GM10248 (cell line): ENCODE measurements at regions of chr5 and their contacts with region 1.

Region 1: GRCh38 chr5:132410451-132411381 is 41.2 kb downstream of the SLC22A5 start:
- DNase-seq: peak; percentile 86
- CTCF ChIP-seq: peak; percentile 47

Region 2: DNA sequence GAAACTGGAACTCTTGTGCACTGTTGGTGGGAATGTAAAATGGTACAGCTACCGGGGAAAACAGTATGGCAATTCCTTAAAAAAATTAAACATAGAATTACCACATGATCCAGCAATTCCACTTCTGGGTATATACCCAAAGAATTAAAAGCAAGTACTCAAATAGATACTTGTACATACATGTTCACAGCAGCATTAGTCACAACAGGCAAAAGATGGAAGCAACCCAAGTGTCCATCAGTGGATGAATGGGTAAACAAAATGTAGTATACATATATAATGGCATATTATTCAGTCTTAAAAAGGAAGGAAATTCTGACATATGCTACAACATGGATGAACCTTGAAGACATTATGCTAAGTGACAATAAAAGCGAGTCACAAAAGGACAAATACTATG is 48.6 kb before region 1 on chr5:
- CTCF ChIA-PET with region 1: no interaction called
- POLR2A ChIA-PET with region 1: no interaction called
- DNase-seq: no peak
- CTCF ChIP-seq: no peak

Region 3: GRCh38 chr5:132375957-132376356 is 34.8 kb before region 1 on chr5:
- CTCF ChIA-PET with region 1: no interaction called
- POLR2A ChIA-PET with region 1: no interaction called
- DNase-seq: no peak
- CTCF ChIP-seq: no peak

Region 4: DNA sequence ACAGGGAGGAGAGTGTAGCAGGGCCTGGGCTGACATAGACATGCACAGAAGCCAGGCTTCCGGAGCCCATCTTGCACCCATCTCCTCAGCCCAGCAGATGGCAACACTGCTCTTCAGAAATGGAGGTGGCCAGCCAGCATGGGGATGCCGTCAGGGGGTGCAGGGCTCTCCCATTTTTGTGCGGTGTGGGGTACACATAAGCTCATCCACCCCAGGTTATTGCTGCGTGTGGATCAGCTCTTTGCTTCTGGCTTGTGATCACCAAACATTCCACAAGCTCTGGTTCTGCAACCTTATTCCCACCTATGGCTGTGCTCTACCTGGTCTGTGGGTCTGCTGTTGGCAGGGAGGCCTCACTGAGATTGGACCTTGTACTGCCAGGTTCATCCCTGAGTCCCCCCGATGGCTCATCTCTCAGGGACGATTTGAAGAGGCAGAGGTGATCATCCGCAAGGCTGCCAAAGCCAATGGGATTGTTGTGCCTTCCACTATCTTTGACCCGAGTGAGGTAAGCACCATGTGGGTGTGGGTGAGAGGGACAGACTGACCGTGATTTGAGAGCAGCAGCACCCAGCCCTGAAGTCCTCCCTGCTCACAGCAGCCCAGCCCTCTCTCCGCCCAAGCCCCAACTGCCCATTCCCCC is 24.0 kb before region 1 on chr5:
- CTCF ChIA-PET with region 1: interaction called, 84 read pairs
- POLR2A ChIA-PET with region 1: no interaction called
- DNase-seq: peak; percentile 87
- CTCF ChIP-seq: peak; percentile 89